Activated B cell treated with CpG ODN at 0.5 μM for 24 hours (primary cell): ENCODE measurements at regions of chr10 and their contacts with region 1.

Region 1: GRCh38 chr10:101042667-101043355 is 11.8 kb downstream of the SFXN3 start:
- DNase-seq: peak; percentile 78
- ATAC-seq: peak; percentile 91
- H3K4me3 Mint-ChIP-seq: peak overlapping the region; percentile 99
- H3K27ac Mint-ChIP-seq: peak overlapping the region; percentile 93
- H3K4me1 Mint-ChIP-seq: peaks cover 13% of the 10 kb centered on the region
- H3K27me3 Mint-ChIP-seq: peaks cover 14% of the 10 kb centered on the region
- CTCF ChIP-seq: no peak

Region 2: DNA sequence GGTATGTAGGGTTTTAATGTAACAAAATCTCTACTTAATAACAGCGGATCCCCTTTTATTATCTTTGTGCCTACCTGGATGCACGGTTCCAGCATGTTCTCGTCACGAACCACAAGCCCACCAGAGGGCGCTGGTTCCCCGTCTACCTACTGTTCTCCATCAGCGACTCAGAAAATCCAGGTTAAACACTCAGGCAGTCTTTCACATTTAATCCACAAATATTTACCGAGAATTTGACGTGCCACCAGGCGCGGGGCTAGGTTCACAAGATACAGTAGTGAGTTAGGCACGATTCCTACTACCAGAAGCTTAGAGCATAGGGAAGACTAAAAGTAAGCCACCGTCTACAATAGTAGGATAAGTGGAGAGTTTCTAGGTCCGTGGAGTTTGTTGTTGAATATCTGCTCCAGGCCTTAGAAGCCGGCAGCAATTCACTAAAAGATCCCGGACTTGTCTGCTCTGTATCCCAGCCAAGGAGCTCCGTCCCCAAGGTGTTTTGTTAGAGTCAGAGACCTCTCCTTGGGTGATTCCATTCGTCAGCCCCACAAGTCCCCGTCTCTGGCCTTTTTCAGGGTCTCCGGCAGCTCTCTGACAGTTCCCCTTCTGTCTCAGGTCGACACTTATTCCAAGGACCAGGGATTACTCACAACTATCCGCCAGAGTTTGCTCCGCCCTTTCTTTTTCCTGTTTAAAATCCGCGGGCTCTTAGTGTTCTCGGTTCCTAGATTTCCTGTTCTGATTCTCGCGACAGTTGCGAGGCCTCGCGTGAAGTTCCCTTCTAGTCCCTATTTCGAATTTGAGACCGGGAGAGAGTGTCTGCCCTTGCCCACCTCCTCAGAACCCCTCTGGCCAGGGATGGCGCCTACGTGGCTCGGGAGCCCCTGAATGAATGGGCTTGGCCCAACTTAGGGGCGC is 17.5 kb after region 1 on chr10:
- CTCF ChIA-PET with region 1: interaction called, 57 read pairs
- POLR2A ChIA-PET with region 1: interaction called, 24 read pairs
- intact Hi-C with region 1: loop called (anchors 1 kb)
- DNase-seq: peak; percentile 79
- ATAC-seq: peak; percentile 65
- H3K4me3 Mint-ChIP-seq: peak overlapping the region; percentile 98
- H3K27ac Mint-ChIP-seq: peak overlapping the region; percentile 95
- H3K4me1 Mint-ChIP-seq: peaks cover 34% of the 10 kb centered on the region
- H3K27me3 Mint-ChIP-seq: peaks cover 6% of the 10 kb centered on the region
- CTCF ChIP-seq: peak; percentile 62

Region 3: DNA sequence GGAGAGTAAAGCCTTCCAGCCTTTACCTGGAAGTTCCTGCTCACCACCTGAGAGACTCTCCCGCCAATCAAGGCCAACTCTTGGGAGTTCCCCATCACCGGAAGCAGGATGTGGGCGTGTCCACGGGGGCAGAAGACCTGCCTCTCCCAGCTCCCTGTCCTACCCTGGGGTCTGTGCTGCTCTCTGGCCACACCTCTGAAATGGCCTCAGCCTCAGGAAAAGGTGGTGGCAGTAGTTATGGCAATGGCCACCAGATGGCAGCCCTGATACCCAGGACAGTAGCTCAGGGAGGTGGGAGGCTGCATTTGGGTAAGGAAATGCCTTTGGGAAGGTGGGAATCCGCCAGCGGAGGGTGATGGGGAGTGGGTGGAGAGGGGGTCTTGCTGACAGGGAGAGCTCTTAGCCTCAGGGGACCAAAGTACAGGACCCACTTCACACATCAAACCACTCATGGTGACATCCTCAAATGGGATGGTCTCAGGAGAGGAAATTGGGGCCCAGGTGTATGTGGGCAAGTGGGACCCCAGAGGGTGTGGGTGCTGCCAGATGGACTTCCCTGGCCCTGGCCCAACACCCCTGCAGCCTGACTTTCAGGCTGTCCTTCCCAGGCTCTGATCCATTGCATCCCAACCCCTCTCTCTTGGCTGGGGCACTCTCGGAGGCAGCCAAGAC is 52.9 kb after region 1 on chr10:
- CTCF ChIA-PET with region 1: interaction called, 3 read pairs
- POLR2A ChIA-PET with region 1: no interaction called
- intact Hi-C with region 1: loop called (anchors 1 kb)
- DNase-seq: peak; percentile 63
- ATAC-seq: peak; percentile 99
- H3K4me3 Mint-ChIP-seq: no peak overlapping the region
- H3K27ac Mint-ChIP-seq: no peak overlapping the region
- H3K4me1 Mint-ChIP-seq: no peaks in the 10 kb centered on the region
- H3K27me3 Mint-ChIP-seq: peaks cover 53% of the 10 kb centered on the region
- CTCF ChIP-seq: no peak

Region 4: GRCh38 chr10:101182936-101183335 is 140.1 kb after region 1 on chr10:
- CTCF ChIA-PET with region 1: no interaction called
- POLR2A ChIA-PET with region 1: no interaction called
- intact Hi-C with region 1: no loop called
- DNase-seq: no peak
- ATAC-seq: no peak
- H3K4me3 Mint-ChIP-seq: no peak overlapping the region
- H3K27ac Mint-ChIP-seq: no peak overlapping the region
- H3K4me1 Mint-ChIP-seq: no peaks in the 10 kb centered on the region
- H3K27me3 Mint-ChIP-seq: peaks cover 31% of the 10 kb centered on the region
- CTCF ChIP-seq: no peak

Region 5: DNA sequence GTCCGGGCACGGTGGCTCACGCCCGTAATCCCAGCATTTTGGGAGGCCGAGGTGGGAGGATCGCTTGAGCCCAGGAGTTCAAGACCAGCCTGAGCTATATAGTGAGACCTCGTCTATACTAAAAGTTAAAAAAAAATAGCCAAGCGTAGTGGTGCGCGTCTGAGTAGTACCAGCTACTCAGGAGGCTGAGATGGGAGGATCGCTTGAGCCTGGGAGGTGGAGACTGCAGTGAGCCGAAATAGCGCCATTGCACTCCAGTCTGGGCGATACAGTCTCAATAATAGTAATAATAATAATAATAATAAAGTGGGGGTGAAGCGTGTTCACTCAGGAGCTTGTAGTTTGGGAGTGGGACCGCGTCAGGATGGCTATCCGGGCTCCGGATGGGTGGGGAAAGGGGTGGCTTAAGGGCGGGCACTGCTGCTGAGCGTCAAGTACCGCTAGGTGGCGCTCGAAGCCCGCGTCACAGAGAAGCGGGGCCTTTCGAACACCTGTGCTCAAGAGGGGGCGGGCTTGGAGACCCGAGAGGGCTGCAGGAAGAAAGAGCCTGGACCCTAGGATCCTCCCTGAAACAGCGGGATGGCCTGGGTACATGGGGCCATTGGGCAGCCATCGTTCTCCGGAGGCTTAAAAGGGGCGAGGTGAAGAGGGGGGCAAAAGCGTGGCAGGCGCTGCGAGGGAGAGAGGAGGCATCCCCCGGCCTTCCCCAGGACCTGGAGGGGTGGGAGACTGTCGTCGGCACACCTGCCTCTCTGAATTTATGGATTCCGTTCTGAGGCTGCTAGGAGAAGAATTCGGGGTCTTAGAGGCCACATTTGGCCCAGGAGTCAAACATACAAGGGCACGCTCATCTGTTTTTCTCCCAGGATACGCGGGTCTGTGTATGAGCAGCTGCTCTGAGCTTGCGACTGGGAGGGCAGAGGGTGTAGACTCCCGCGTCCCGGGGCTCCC is 171.9 kb after region 1 on chr10:
- CTCF ChIA-PET with region 1: no interaction called
- POLR2A ChIA-PET with region 1: no interaction called
- intact Hi-C with region 1: loop called (anchors 1 kb)
- DNase-seq: peak; percentile 72
- ATAC-seq: peak; percentile 75
- H3K4me3 Mint-ChIP-seq: peak overlapping the region; percentile 60
- H3K27ac Mint-ChIP-seq: peak overlapping the region; percentile 68
- H3K4me1 Mint-ChIP-seq: peaks cover 32% of the 10 kb centered on the region
- H3K27me3 Mint-ChIP-seq: peaks cover 56% of the 10 kb centered on the region
- CTCF ChIP-seq: peak; percentile 73

Region 6: GRCh38 chr10:101897633-101898032 is 854.8 kb after region 1 on chr10:
- CTCF ChIA-PET with region 1: no interaction called
- POLR2A ChIA-PET with region 1: interaction called, 13 read pairs
- intact Hi-C with region 1: no loop called
- DNase-seq: no peak
- ATAC-seq: no peak
- H3K4me3 Mint-ChIP-seq: no peak overlapping the region
- H3K27ac Mint-ChIP-seq: peak overlapping the region; percentile 35
- H3K4me1 Mint-ChIP-seq: peaks cover 80% of the 10 kb centered on the region
- H3K27me3 Mint-ChIP-seq: no peaks in the 10 kb centered on the region
- CTCF ChIP-seq: no peak